H1 (cell line): ENCODE measurements at regions of chr5 and their contacts with region 1.

Region 1: GRCh38 chr5:153827397-153827796 is 211.3 kb downstream of the FAM114A2 start:
- DNase-seq: no peak
- H3K4me3 ChIP-seq: no peak overlapping the region
- H3K27ac ChIP-seq: no peak overlapping the region
- H3K4me1 ChIP-seq: peaks cover 0 to 9% (median 2%) of the 10 kb centered on the region in 4 experiments; a peak in 4 of 7 replicates
- H3K27me3 ChIP-seq: no peaks in the 10 kb centered on the region
- CTCF ChIP-seq: peak; percentile 45 to 69 (median 51); a peak in 3 of 4 replicates
- EP300 ChIP-seq: no peak
- POLR2A ChIP-seq: no peak
- RAD21 ChIP-seq: peak; percentile 70 to 74

Region 2: DNA sequence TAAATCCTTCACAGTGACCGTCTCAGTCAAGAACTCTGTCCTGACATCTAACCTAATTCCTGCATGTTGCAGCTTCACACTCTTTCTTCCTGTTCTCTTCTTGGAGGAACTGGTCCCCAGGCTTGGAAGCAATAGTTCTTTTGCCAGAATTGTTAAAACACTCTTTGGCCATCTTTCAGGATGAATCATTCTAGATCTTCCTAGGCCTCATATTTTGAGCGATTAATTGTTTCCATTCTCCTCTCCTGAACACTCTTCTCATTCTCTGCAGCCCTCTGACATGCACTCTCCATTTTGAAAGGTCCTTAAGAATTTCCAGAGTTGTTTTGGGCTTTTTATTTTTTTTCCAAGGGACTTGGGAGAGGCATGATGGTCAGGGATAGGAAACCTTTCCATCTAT is 125.5 kb after region 1 on chr5:
- CTCF ChIA-PET with region 1: interaction called, 15 read pairs
- POLR2A ChIA-PET with region 1: no interaction called
- DNase-seq: no peak
- H3K4me3 ChIP-seq: no peak overlapping the region
- H3K27ac ChIP-seq: no peak overlapping the region
- H3K4me1 ChIP-seq: no peaks in the 10 kb centered on the region
- H3K27me3 ChIP-seq: no peaks in the 10 kb centered on the region
- CTCF ChIP-seq: no peak
- EP300 ChIP-seq: no peak
- POLR2A ChIP-seq: no peak
- RAD21 ChIP-seq: no peak

Region 3: GRCh38 chr5:153959134-153959957 is 131.9 kb after region 1 on chr5:
- CTCF ChIA-PET with region 1: interaction called, 78 read pairs
- POLR2A ChIA-PET with region 1: interaction called, 3 read pairs
- DNase-seq: peak; percentile 61 to 80
- H3K4me3 ChIP-seq: 0 out of 8 replicates have a peak overlapping the region, but pooled peaks of 1 of the 4 experiments have one; percentile 4
- H3K27ac ChIP-seq: peak overlapping the region; percentile 18; the same call in 1 of the 2 replicates
- H3K4me1 ChIP-seq: peaks cover 3 to 19% (median 14%) of the 10 kb centered on the region in 4 experiments
- H3K27me3 ChIP-seq: no peaks in the 10 kb centered on the region
- CTCF ChIP-seq: no peak
- EP300 ChIP-seq: peak in 1 of 2 experiments; percentile 94; a peak in 2 of 3 replicates
- POLR2A ChIP-seq: peak in 1 of 2 experiments; percentile 31; a peak in 2 of 3 replicates
- RAD21 ChIP-seq: peak; percentile 16 to 33; a peak in 2 of 4 replicates